ENCODE measurements at regions of chr14 and their contacts with region 1.

Region 1: GRCh38 chr14:92135267-92135666 is 13.5 kb downstream of the CPSF2 start:
- DNase-seq: no peak
- H3K4me3 ChIP-seq: no peak overlapping the region
- H3K27ac ChIP-seq: no peak overlapping the region
- H3K4me1 ChIP-seq: no peaks in the 10 kb centered on the region
- H3K27me3 ChIP-seq: no peaks in the 10 kb centered on the region
- CTCF ChIP-seq: peak in 2 of 3 donors; percentile 31 to 35
- EP300 ChIP-seq: no peak
- POLR2A ChIP-seq: no peak

Region 2: GRCh38 chr14:92456215-92457015 is 321.1 kb after region 1 on chr14:
- intact Hi-C with region 1: loop called in 1 of 4 experiments (anchors 10 kb)
- DNase-seq: peak in 3 of 5 donors; percentile 28 to 56 (median 50)
- H3K4me3 ChIP-seq: no peak overlapping the region
- H3K27ac ChIP-seq: no peak overlapping the region
- H3K4me1 ChIP-seq: peaks cover 3% of the 10 kb centered on the region
- H3K27me3 ChIP-seq: no peaks in the 10 kb centered on the region
- CTCF ChIP-seq: peak in 2 of 3 donors; percentile 17 to 37
- EP300 ChIP-seq: no peak
- POLR2A ChIP-seq: no peak

Region 3: DNA sequence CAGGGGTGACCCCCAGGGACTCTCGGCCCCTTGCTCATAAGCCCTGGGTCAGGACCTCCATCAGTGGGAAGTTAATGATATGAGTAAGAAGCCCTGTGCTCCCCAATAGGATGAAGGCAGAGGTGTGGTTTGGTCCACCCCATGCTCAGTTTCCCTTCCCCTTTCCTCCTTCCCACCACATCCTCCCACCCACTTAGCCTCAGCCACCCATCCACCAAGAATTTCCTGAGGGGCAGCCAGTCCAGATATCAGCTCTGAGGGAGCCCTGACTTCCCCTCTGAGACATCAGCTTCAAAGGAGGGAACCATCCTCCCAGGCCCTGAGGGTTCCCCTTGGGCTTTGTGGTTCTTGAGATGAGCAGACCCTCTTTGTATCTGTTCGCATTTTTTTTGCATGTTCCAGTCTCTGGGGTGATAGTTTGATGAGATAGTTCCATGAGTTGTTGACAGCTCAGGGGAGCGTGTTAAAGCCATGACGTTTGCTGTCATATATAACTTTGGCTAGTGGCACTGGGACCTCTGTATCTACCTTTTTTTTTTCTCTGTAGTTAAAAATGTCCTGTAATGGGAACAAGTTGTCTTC is 541.9 kb after region 1 on chr14:
- intact Hi-C with region 1: loop called in 2 of 4 experiments (anchors 10 kb)
- DNase-seq: peak in 1 of 5 donors; percentile 6
- H3K4me3 ChIP-seq: no peak overlapping the region
- H3K27ac ChIP-seq: no peak overlapping the region
- H3K4me1 ChIP-seq: no peaks in the 10 kb centered on the region
- H3K27me3 ChIP-seq: no peaks in the 10 kb centered on the region
- CTCF ChIP-seq: no peak
- EP300 ChIP-seq: no peak
- POLR2A ChIP-seq: no peak

Region 4: DNA sequence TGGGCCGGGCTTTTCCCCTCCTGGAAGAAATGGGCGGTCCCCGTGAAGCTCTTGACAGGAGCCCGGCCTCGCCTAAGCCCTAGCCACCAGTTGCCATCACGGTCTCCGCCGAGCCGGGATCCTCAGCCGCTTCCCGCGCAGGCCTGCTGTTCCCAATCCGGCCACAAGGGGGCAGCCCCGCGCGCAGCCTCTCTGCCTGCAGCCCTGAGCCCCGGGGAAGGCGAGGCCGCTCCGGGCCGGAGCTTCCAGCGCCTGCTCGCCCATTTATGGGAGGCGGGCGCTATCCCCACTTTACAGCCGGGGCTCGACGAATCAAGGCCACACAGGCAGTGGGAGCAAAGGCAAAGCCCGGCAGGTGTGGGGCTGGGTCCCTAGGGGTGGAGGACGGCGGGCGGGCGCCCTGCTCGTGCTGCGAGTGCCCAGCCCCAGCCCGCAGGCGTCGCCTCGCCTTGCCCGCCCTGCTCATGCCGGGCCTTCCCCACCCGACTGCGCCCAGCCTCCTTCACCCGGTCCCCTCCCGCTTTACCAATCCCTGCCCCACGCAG is 551.7 kb after region 1 on chr14:
- intact Hi-C with region 1: loop called in 1 of 4 experiments (anchors 10 kb)
- DNase-seq: peak; percentile 68 to 90 (median 79)
- H3K4me3 ChIP-seq: peak overlapping the region; percentile 6
- H3K27ac ChIP-seq: no peak overlapping the region
- H3K4me1 ChIP-seq: peaks cover 5% of the 10 kb centered on the region
- H3K27me3 ChIP-seq: no peaks in the 10 kb centered on the region
- CTCF ChIP-seq: peak; percentile 89 to 100 (median 98)
- EP300 ChIP-seq: no peak
- POLR2A ChIP-seq: no peak

Measured in ovary (tissue), 10 donors.